ENCODE measurements at regions of chr13 and their contacts with region 1.

Region 1: GRCh38 chr13:60396783-60397703 is at the start of gene TDRD3:
- DNase-seq: peak; percentile 75
- H3K4me3 Mint-ChIP-seq: peak within 1 kb of the TSS; percentile 95
- H3K27ac Mint-ChIP-seq: peak within 1 kb of the TSS; percentile 97
- H3K4me1 Mint-ChIP-seq: peaks cover 44% of the 10 kb centered on the region
- H3K27me3 Mint-ChIP-seq: no peaks in the 10 kb centered on the region
- total RNA-seq, gene TDRD3: 19.6 and 20.7 TPM in 2 replicates

Region 2: DNA sequence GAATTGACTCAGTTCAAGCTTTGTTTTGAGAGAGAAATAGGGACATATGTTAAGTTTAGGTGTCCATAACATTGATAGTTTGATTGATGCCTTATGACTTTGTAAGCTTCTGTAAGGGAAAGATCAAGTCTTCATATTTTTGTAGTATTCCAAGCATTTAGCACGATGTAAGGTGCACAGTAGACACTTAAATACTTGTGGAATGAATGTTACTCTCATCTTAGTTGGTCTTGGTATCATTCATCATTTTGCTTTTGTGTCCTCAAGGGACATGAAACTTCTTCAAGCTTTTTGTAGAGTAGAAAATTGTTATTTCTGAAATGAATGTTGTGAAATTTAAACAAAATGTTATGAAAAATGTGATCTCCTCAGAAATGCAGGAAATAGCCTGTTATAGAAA is 10.1 kb after region 1 on chr13:
- intact Hi-C with region 1: no loop called
- DNase-seq: no peak
- H3K4me3 Mint-ChIP-seq: no peak overlapping the region
- H3K27ac Mint-ChIP-seq: no peak overlapping the region
- H3K4me1 Mint-ChIP-seq: peaks cover 15% of the 10 kb centered on the region
- H3K27me3 Mint-ChIP-seq: no peaks in the 10 kb centered on the region

Region 3: GRCh38 chr13:60417734-60418133 is 20.7 kb after region 1 on chr13:
- intact Hi-C with region 1: loop called (anchors 2 kb)
- DNase-seq: no peak
- H3K4me3 Mint-ChIP-seq: no peak overlapping the region
- H3K27ac Mint-ChIP-seq: no peak overlapping the region
- H3K4me1 Mint-ChIP-seq: peaks cover 11% of the 10 kb centered on the region
- H3K27me3 Mint-ChIP-seq: no peaks in the 10 kb centered on the region

Measured in activated T-helper 1 cell treated with anti-CD3 and anti-CD28 coated beads, Interleukin-12 subunit alpha, Interleukin-12 subunit beta, Interleukin-2, Interleukin-4 antibody, amounts not matched to agents 30 ng/mL and 10 ng/mL and 1 ng/mL, durations not matched to agents 14 hours and 24 hours and 36 hours (primary cell).